ENCODE measurements at regions of chr17 and their contacts with region 1.

Region 1: DNA sequence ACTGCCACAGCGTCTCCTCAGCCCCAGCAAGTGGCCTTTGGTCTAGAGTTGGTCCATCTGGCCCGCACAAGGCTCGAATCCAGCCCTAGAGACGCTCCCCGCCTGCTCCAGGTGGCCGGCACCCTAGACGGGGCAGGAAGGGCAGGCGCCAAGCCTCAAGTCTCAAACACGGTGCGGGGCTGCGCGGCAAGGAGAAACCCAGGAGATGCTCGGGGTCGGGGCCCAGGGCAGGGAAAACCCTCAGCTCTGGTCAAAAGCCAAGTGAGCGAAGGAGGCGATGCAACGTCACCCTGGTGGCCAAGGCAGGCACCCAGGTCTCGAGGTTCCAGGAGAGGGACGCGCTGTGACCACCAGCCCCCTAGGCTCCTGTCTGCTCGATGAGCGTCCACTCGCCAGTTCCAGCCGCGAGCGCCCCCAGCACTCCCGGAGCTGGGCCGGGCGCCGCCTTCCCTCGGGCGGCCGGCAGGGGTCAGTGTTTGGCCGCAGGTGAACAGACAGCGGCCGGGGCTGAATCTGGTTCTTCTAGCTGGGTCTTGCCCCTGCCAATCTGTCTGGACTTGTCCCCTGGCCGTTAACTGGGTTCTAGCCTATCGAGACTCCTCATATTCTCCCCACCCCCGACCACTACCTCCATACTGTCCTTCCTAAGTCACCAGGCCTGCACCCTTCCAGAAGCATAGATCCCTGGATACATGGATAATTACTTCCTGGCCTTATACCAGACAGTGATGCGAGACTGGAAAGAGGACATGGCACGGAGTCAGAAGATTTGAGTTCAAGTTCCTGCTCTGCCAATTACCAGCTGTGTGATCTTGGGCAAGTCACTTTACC is 44.0 kb downstream of the PRAC1 start:
- DNase-seq: peak; percentile 83
- ATAC-seq: peak; percentile 97
- H3K4me3 ChIP-seq: no peak overlapping the region
- H3K27ac ChIP-seq: no peak overlapping the region
- H3K4me1 ChIP-seq: peaks cover 4% of the 10 kb centered on the region
- H3K27me3 ChIP-seq: peaks cover 50% of the 10 kb centered on the region
- CTCF ChIP-seq: peak; percentile 96

Region 2: DNA sequence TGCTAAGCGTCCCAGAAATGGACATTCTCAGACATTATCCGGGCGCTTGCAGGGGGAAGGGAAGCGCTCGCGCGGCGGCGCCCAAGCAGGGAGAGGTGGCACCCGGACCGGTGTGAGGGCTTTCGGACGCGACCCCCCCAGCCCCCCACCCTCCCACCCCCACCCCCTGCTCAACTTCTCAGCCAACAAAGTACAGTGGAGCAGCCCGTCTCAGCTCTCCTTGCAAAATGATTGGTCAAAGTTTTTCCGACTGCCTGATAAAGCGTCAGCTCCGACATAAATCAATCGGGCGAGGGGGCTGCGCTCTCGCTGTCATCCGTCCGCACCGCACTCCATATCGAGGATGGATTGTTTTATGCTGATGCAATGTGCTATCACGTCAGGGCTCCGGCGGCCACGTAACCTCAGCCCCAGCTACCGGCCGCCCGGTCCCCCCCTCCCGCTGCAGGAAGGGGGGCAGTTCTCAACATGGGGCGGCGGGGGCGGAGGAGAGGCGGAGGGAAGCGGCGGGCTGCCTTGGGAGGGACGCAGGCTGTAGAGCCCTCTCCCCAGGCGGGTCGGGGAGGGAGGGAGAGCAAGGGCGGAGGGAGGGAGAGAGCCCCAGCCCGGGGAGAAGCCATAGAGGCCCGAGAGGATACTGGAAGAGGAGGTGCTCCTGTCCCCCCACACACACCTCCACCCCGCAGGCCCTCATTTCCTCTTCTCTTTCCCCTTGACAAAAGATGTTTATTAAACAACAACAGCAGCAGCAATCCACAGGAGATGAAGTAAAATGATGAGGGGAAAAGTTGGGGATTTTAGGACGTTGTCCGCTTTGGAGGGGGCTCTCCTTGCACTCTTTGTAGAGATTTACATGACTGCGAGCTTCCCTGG is 51.9 kb before region 1 on chr17 and contains the start of gene HOXB9:
- intact Hi-C with region 1: no loop called
- DNase-seq: no peak
- ATAC-seq: peak; percentile 4
- H3K4me3 ChIP-seq: peak within 1 kb of the TSS; percentile 31
- H3K27ac ChIP-seq: no peak within 1 kb of the TSS
- H3K4me1 ChIP-seq: peaks cover 22% of the 10 kb centered on the region
- H3K27me3 ChIP-seq: peaks cover 100% of the 10 kb centered on the region
- CTCF ChIP-seq: no peak
- total RNA-seq, gene HOXB9: not detected

Region 3: GRCh38 chr17:48738803-48739526 is 60.6 kb after region 1 on chr17:
- intact Hi-C with region 1: no loop called
- DNase-seq: peak; percentile 40
- ATAC-seq: no peak
- H3K4me3 ChIP-seq: no peak overlapping the region
- H3K27ac ChIP-seq: no peak overlapping the region
- H3K4me1 ChIP-seq: no peaks in the 10 kb centered on the region
- H3K27me3 ChIP-seq: peaks cover 99% of the 10 kb centered on the region
- CTCF ChIP-seq: no peak

Region 4: DNA sequence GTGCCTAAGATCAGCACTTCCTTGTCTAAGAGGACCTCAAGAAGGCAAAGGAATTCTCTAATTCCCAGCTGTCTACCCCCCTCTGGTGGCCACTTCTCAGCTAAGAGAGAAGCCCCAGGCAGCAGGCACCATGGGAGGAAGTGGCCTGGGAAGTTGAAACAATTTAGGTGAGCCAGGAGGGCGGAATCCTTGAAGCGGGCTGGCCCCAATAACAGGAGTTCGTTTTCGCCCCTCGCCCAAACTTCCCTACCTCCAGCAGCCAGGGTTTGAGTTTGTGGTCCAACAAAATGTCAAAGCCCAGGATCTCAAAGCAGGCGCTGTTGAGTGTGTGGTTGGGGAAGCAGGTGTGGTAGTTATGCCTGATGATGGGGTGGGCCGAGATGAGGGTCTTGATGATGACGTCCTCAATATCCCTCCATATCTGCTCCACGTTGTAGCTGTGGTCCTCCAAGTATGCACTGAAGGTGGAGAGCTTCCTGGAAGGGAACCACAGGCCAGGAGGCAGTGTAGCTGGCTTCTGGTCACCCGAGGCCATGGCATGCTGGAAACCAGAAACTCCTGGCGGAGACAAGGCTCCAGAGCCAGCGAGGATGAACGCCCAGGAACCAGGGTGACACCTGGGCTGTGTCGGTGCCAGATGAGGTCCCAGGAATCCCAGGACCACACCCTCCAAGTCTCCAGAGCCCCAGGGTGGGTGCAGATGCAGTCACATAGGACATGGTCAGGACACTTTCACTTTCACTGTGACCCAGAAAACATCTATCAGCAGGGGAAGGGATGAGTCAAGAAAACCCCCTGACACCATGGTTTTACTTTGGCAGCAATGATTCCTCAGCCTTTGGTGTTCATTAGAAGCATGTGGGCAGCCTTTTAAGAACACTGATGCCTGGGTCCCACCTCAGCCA is 113.0 kb after region 1 on chr17:
- intact Hi-C with region 1: loop called (anchors 10 kb)
- DNase-seq: peak; percentile 68
- ATAC-seq: peak; percentile 91
- H3K4me3 ChIP-seq: no peak overlapping the region
- H3K27ac ChIP-seq: no peak overlapping the region
- H3K4me1 ChIP-seq: peaks cover 3% of the 10 kb centered on the region
- H3K27me3 ChIP-seq: no peaks in the 10 kb centered on the region
- CTCF ChIP-seq: peak; percentile 74

Measured in upper lobe of right lung (tissue), 1 donor.